IMR-90 (cell line): ENCODE measurements at regions of chr20 and their contacts with region 1.

Region 1: GRCh38 chr20:14454296-14454695 is 116.9 kb upstream of the FLRT3 start:
- DNase-seq: peak; percentile 55
- ATAC-seq: peak; percentile 79
- H3K4me3 ChIP-seq: no peak overlapping the region
- H3K27ac ChIP-seq: no peak overlapping the region
- H3K4me1 ChIP-seq: peaks cover 2% of the 10 kb centered on the region; the same call in 1 of the 2 replicates
- H3K27me3 ChIP-seq: no peaks in the 10 kb centered on the region
- CTCF ChIP-seq: no peak
- POLR2A ChIP-seq: no peak
- RAD21 ChIP-seq: no peak

Region 2: DNA sequence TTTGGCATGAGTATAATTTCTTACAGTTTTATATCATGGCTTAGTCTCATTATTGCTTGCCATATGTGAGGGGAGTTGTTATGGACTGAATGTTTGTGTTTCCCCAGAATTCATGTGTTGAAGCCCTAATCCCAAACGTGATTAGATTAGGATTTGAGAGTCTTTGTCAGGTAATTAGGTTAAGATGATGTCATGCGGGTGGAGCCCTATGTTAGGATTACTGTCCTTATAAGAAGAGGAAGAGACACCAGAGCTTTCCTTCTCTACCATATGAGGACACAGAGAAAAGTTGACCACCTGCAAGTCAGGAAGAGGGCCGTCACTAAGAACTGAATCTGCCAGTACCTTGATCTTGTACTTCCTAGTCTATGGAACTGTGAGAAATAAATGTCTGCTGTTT is 60.6 kb before region 1 on chr20:
- CTCF ChIA-PET with region 1: no interaction called
- POLR2A ChIA-PET with region 1: interaction called, 16 read pairs
- dilution Hi-C with region 1: no loop called
- in situ Hi-C with region 1: no loop called
- intact Hi-C with region 1: no loop called
- DNase-seq: no peak
- ATAC-seq: no peak
- H3K4me3 ChIP-seq: no peak overlapping the region
- H3K27ac ChIP-seq: no peak overlapping the region
- H3K4me1 ChIP-seq: no peaks in the 10 kb centered on the region
- H3K27me3 ChIP-seq: no peaks in the 10 kb centered on the region
- CTCF ChIP-seq: no peak
- POLR2A ChIP-seq: no peak
- RAD21 ChIP-seq: no peak

Region 3: DNA sequence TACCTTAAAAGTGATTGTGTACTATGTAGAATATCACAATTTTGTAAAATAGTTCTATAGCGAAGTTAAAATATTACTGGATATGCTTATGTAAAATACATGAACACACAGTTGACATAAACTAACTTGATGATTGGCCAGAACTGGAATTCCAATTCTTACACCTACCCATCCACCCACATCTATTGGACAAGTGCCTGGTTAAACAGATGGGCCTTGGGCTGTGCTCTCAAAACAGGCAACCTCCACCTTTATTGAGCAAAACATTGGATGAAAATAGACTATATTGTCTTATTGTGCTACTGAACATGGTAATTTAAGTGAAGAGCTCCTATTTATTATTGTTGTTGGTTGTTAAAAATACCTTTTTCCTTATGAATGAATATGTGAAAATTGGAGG is 37.1 kb after region 1 on chr20:
- CTCF ChIA-PET with region 1: no interaction called
- POLR2A ChIA-PET with region 1: no interaction called
- dilution Hi-C with region 1: no loop called
- in situ Hi-C with region 1: no loop called
- intact Hi-C with region 1: loop called (anchors 5 kb)
- DNase-seq: no peak
- ATAC-seq: no peak
- H3K4me3 ChIP-seq: no peak overlapping the region
- H3K27ac ChIP-seq: no peak overlapping the region
- H3K4me1 ChIP-seq: no peaks in the 10 kb centered on the region
- H3K27me3 ChIP-seq: no peaks in the 10 kb centered on the region
- CTCF ChIP-seq: no peak
- POLR2A ChIP-seq: no peak
- RAD21 ChIP-seq: no peak